Right ventricle myocardium inferior (tissue), 1 donor: ENCODE measurements at regions of chr5 and their contacts with region 1.

Region 1: GRCh38 chr5:181207214-181208107 is 2.5 kb upstream of the TRIM7 start:
- DNase-seq: no peak
- ATAC-seq: peak; percentile 48

Region 2: GRCh38 chr5:180910735-180911134 is 296.7 kb before region 1 on chr5:
- intact Hi-C with region 1: no loop called
- DNase-seq: no peak
- ATAC-seq: no peak

Region 3: DNA sequence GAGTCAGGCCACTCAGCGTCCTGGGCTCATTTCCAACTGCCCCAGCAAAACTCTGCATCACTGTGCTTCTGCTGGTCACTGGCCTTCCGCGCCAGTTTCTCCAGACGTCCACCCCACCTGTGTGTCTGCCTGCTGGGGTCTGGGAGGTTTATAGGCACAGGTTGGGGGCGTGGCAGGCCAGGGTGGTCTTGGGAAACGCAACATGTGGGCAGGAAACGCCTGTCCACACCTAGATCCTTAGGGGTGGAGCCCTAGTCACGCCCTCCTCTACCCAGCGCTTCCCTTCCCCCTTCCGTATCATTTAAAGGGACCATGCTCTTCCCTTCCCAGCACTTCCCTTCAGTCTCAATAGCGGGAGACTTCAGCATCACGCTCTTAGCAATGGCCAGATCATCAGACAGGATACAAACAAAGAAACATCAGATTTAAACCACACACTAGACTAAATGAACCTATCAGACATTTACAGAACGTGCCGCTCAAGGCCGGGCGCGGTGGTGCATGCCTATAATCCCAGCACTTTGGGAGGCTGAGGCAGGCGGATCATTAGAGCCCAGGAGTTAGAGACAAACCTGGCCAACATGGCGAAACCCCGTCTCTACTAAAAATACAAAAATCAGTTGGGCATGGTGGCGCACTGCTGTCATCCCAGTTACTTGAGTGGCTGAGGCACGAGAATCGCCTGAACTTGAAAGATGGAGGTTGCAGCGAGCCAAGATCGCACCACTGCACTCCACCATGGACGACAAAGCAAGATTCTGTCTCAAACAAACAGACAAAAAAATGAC is 179.2 kb before region 1 on chr5:
- intact Hi-C with region 1: no loop called
- DNase-seq: no peak
- ATAC-seq: no peak

Region 4: DNA sequence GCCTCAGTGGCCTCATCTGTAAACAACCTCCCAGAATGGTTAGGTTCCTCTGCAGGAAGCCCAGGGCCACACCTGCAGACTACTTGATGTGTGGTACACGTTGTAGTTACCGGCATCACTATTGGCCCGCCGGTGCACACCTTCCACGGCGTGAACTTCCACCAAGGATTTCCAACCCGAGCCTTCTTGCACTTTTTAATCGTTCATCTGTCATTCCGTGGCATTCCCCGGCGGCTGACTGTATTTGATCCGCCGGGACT is 10.3 kb after region 1 on chr5:
- intact Hi-C with region 1: loop called (anchors 1 kb)
- DNase-seq: no peak
- ATAC-seq: no peak